Activated B cell treated with CpG ODN at 0.5 μM for 24 hours (primary cell): ENCODE measurements at regions of chr4 and their contacts with region 1.

Region 1: DNA sequence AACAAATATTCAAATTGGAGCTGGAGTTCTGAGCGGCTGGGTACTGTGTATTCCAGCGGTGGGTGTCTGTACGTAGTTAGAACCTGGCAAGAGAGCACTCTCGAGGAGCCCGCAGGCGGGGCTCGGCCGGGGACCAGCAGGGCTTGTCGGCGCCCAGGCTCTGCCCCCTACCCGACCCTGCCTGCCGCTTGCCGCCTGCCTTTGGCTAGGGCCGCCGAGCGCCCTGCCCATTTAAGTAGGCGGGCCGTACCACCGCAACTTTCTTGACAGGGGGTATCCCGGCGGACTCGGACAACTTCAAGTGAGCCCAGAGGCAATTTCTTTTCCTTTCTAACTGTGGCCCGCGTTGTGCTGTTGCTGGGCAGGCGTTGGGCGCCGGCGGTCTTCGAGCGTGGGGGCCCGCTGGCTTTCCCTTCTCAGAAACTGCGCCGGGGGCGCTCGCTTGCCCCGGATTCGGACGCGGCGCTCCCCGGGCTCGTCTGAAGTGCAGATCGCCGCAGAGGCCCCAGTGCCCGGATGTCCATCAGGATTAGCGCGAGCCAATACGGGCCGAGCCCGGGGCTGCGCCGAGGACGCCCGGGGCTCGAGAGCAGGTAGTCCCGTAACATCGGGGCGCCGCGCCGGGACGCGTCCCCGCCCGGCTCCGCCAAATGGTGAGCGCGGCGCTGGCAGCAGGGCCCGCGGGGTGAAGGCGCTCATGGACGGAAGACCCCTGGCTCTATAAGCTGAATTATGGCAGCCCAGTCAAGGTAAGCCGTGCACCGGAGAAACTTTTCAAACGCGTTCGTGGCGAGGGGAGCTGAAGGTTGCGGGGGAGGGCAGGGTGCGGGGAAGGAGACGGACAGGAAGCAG is 72.1 kb downstream of the AFF1 start:
- DNase-seq: peak; percentile 93
- ATAC-seq: peak; percentile 83
- H3K4me3 Mint-ChIP-seq: peak overlapping the region; percentile 97
- H3K27ac Mint-ChIP-seq: peak overlapping the region; percentile 98
- H3K4me1 Mint-ChIP-seq: peaks cover 56% of the 10 kb centered on the region
- H3K27me3 Mint-ChIP-seq: no peaks in the 10 kb centered on the region
- CTCF ChIP-seq: no peak

Region 2: DNA sequence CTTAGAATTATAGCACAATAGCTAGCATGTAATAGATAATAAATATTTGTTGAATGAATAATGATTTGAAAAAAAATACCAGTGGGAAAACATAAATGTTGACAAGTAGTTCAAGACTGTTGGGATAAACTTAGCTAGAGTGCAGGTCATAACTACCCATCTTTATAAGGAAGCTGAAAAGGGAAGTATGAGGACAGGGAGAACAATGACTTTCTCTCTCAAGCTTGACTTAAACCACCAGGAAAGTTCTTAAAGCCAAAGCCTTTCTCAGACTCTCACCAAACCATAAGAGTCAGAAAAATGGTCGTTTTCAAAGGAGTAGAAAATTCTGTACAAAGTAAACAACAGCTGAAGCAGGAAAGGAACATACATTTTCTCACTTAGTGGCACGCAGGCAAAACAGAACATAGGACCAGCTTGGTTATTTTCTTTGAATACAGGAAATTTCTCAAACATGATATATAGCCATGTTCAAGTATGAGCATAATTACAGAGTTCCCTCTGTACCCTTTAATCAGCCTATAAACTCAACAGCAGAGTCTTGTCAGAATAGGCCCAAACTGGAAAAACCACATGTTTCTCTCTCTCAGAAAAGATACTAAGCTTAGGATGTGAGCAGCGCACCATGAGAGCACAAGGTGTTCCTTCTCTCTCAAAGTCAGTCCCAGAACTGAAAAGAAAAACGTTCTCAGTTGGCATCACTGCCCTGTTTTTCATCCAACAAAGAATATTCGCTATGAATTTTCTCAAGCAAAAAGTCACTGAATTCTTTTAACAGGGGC is 675.8 kb before region 1 on chr4:
- CTCF ChIA-PET with region 1: no interaction called
- POLR2A ChIA-PET with region 1: no interaction called
- intact Hi-C with region 1: no loop called
- DNase-seq: no peak
- ATAC-seq: no peak
- H3K4me3 Mint-ChIP-seq: no peak overlapping the region
- H3K27ac Mint-ChIP-seq: no peak overlapping the region
- H3K4me1 Mint-ChIP-seq: no peaks in the 10 kb centered on the region
- H3K27me3 Mint-ChIP-seq: peaks cover under 1% of the 10 kb centered on the region
- CTCF ChIP-seq: no peak

Region 3: GRCh38 chr4:86924811-86925210 is 82.1 kb before region 1 on chr4:
- CTCF ChIA-PET with region 1: interaction called, 20 read pairs
- POLR2A ChIA-PET with region 1: interaction called, 26 read pairs
- intact Hi-C with region 1: loop called (anchors 1 kb)
- DNase-seq: no peak
- ATAC-seq: no peak
- H3K4me3 Mint-ChIP-seq: no peak overlapping the region
- H3K27ac Mint-ChIP-seq: no peak overlapping the region
- H3K4me1 Mint-ChIP-seq: peaks cover 15% of the 10 kb centered on the region
- H3K27me3 Mint-ChIP-seq: no peaks in the 10 kb centered on the region
- CTCF ChIP-seq: no peak

Region 4: DNA sequence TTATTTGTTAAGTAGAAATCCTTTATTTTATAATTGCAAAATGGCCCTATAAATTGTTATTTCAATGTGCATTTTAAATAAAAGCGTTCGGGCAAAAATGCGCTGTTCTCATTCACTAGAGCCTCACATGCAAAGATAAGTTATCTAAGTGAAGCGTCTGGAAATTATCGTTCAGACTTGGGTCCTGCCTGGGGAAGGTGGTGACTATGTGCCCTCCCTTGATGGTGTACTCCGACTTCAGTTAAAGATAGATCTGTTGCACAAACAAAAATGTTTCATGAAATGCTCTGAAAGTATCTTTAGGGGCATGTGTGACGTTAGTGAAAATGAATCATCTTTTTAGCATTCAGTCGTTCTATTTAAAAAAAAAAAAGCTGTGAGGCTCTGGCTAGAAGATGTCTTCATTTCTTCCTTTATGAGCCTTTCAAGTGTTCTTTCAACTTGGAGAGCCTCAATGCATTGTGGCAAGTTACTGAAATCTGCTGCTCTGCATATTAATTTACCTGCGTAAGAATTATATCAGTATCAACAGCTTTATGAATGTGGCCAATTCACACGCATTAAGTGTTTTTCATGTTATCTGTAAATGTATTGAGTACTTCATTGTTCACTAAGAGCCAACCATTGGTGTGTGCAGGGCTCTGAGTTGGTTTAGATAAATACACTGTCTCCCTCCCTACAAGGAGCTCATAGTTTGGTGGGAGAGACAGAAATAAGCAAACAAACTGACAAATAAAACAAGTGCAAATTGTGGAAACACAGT is 10.9 kb after region 1 on chr4:
- CTCF ChIA-PET with region 1: no interaction called
- POLR2A ChIA-PET with region 1: interaction called, 11 read pairs
- intact Hi-C with region 1: loop called (anchors 1 kb)
- DNase-seq: no peak
- ATAC-seq: no peak
- H3K4me3 Mint-ChIP-seq: peak overlapping the region; percentile 24
- H3K27ac Mint-ChIP-seq: peak overlapping the region; percentile 88
- H3K4me1 Mint-ChIP-seq: peaks cover 86% of the 10 kb centered on the region
- H3K27me3 Mint-ChIP-seq: no peaks in the 10 kb centered on the region
- CTCF ChIP-seq: no peak

Region 5: DNA sequence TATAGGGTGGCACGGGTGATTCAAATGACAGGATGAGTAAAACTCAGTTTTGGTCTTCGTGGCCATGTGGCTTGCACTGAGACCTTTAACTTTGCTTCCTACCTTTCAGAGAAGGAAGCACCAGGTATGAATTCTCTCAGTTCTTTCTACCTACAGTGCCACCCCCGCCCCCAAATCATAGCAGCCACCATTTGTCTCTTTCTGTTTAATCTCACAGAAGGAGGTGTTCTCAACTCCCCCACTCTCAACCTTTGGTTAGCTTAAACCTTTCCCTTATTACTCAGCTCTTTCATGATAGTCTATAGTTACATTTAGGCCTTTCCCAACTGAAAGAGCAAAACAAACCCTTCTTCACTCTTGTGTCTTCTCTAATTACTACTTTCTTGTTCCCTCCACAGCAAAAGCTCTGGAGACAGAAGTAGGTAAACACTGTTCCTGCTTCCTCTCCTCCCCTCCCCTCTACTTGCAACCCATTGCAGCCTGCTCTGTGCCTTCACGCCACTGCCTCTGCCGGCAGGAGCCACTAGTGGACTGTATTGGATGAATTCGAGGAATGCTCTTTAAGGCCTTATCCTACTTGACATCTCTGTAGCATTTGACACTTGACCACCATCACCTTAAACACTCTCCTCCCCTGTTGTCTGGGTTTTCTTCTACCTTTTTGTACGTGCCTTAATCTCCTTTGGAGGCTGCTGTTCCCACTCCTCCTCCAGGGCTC is 51.6 kb after region 1 on chr4:
- CTCF ChIA-PET with region 1: no interaction called
- POLR2A ChIA-PET with region 1: interaction called, 15 read pairs
- intact Hi-C with region 1: no loop called
- DNase-seq: no peak
- ATAC-seq: peak; percentile 42
- H3K4me3 Mint-ChIP-seq: no peak overlapping the region
- H3K27ac Mint-ChIP-seq: peak overlapping the region; percentile 28
- H3K4me1 Mint-ChIP-seq: peaks cover 53% of the 10 kb centered on the region
- H3K27me3 Mint-ChIP-seq: no peaks in the 10 kb centered on the region
- CTCF ChIP-seq: no peak

Region 6: DNA sequence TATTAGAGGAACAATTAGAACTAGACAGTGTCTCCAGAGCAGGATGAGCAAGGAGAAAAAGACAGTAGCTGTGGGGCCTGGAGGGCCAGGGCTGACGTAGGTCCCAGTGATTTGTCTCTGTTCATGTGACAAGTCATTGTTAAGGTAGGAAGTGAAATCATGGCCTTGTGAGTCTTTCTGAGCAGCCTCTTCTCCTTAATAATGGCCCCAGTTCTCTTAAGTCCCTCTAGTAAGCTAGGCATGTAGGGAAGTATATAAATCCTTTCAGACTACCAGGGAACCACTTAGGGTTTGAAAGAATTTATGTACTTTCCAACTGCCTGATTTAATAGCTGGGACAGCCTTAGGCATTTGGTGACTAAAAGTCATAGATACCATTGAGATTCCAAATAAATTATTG is 80.5 kb after region 1 on chr4:
- CTCF ChIA-PET with region 1: interaction called, 3 read pairs
- POLR2A ChIA-PET with region 1: interaction called, 25 read pairs
- intact Hi-C with region 1: no loop called
- DNase-seq: no peak
- ATAC-seq: no peak
- H3K4me3 Mint-ChIP-seq: no peak overlapping the region
- H3K27ac Mint-ChIP-seq: no peak overlapping the region
- H3K4me1 Mint-ChIP-seq: peaks cover 7% of the 10 kb centered on the region
- H3K27me3 Mint-ChIP-seq: no peaks in the 10 kb centered on the region
- CTCF ChIP-seq: no peak

Region 7: GRCh38 chr4:87220094-87220822 is 213.4 kb after region 1 on chr4 and contains the start of gene KLHL8:
- CTCF ChIA-PET with region 1: no interaction called
- POLR2A ChIA-PET with region 1: interaction called, 4 read pairs
- intact Hi-C with region 1: loop called (anchors 1 kb)
- DNase-seq: peak; percentile 93
- ATAC-seq: peak; percentile 92
- H3K4me3 Mint-ChIP-seq: peak within 1 kb of the TSS; percentile 95
- H3K27ac Mint-ChIP-seq: peak within 1 kb of the TSS; percentile 93
- H3K4me1 Mint-ChIP-seq: peaks cover 17% of the 10 kb centered on the region
- H3K27me3 Mint-ChIP-seq: no peaks in the 10 kb centered on the region
- CTCF ChIP-seq: no peak
- total RNA-seq, gene KLHL8: 10.5 and 12.6 TPM in 2 replicates

Region 8: GRCh38 chr4:88284439-88285234 is 1277.7 kb after region 1 on chr4 and contains the start of gene PPM1K:
- CTCF ChIA-PET with region 1: no interaction called
- POLR2A ChIA-PET with region 1: interaction called, 3 read pairs
- intact Hi-C with region 1: loop called (anchors 5 kb)
- DNase-seq: peak; percentile 99
- ATAC-seq: peak; percentile 81
- H3K4me3 Mint-ChIP-seq: peak within 1 kb of the TSS; percentile 98
- H3K27ac Mint-ChIP-seq: peak within 1 kb of the TSS; percentile 99
- H3K4me1 Mint-ChIP-seq: peaks cover 54% of the 10 kb centered on the region
- H3K27me3 Mint-ChIP-seq: no peaks in the 10 kb centered on the region
- CTCF ChIP-seq: no peak
- total RNA-seq, gene PPM1K: 72.1 and 76.6 TPM in 2 replicates